CD4-positive, alpha-beta T cell (primary cell): ENCODE measurements at regions of chr4 and their contacts with region 1.

Region 1: GRCh38 chr4:75724066-75724866 is at the start of gene USO1:
- DNase-seq: peak; percentile 99 to 100 (median 99)
- ATAC-seq: peak; percentile 91
- H3K4me3 ChIP-seq: peak within 1 kb of the TSS; percentile 93
- H3K4me3 Mint-ChIP-seq: peak within 1 kb of the TSS; percentile 99
- H3K27ac ChIP-seq: peak within 1 kb of the TSS; percentile 65 to 83
- H3K27ac Mint-ChIP-seq: peak within 1 kb of the TSS; percentile 95
- H3K4me1 ChIP-seq: peaks cover 27% of the 10 kb centered on the region
- H3K4me1 Mint-ChIP-seq: peaks cover 64% of the 10 kb centered on the region
- H3K27me3 ChIP-seq: no peaks in the 10 kb centered on the region
- H3K27me3 Mint-ChIP-seq: no peaks in the 10 kb centered on the region
- CTCF ChIP-seq: peak; percentile 78
- total RNA-seq, gene USO1: 10.5 to 10.9 TPM

Region 2: DNA sequence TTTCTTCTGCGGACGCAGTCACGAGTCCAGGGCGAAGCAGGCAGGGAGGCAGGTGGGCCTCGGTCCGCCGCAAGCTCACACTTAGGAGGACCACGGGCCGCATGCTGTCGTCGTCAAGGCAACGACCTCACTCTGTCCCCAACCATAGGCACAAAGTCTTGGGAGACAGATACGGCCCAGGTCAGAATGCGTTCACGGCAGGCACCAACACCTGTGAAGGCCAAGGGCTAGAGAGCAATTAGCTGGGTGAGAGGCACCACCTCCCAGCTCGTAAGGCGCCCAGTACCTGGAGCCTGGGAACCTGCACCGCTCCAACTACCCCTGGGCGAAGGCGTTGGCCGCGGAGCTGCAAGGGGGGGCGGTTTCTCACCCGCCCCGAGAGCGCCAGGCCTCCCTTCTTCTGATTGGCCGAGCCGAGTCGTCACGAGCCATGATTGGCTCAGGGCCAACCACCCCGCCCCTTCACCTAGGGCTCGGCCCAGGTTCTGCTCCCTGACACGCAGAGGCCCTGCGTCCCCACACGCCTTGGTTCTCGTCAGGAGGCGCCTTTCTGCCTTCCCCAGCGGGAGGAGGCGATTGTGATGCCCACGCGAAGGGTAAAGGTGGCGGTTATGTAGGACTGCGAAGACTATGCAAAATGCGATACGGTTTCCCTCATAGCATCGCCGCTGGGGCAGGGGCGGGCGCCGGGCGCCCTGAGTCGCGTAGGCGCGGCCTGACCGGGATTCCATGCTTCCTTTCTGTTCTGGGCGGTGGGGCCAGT is 93.9 kb before region 1 on chr4 and contains the start of gene CDKL2:
- CTCF ChIA-PET with region 1: interaction called, 3 read pairs
- POLR2A ChIA-PET with region 1: interaction called, 20 read pairs
- intact Hi-C with region 1: loop called (anchors 1 to 2 kb)
- DNase-seq: peak; percentile 88 to 96 (median 92)
- ATAC-seq: peak; percentile 99
- H3K4me3 ChIP-seq: peak within 1 kb of the TSS; percentile 85
- H3K4me3 Mint-ChIP-seq: peak within 1 kb of the TSS; percentile 90
- H3K27ac ChIP-seq: peak within 1 kb of the TSS in 1 of 2 donors; percentile 48
- H3K27ac Mint-ChIP-seq: peak within 1 kb of the TSS; percentile 75
- H3K4me1 ChIP-seq: peaks cover 16% of the 10 kb centered on the region
- H3K4me1 Mint-ChIP-seq: peaks cover 12% of the 10 kb centered on the region
- H3K27me3 ChIP-seq: no peaks in the 10 kb centered on the region
- H3K27me3 Mint-ChIP-seq: no peaks in the 10 kb centered on the region
- CTCF ChIP-seq: no peak
- total RNA-seq, gene CDKL2: 0.38 to 0.92 TPM

Region 3: GRCh38 chr4:75653845-75654503 is 70.3 kb before region 1 on chr4:
- CTCF ChIA-PET with region 1: interaction called, 16 read pairs
- POLR2A ChIA-PET with region 1: interaction called, 15 read pairs
- intact Hi-C with region 1: loop called in 1 of 2 experiments (anchors 1 kb)
- DNase-seq: peak in 3 of 14 experiments; percentile 27 to 34 (median 29)
- ATAC-seq: no peak
- H3K4me3 ChIP-seq: no peak overlapping the region
- H3K4me3 Mint-ChIP-seq: no peak overlapping the region
- H3K27ac ChIP-seq: peak overlapping the region in 1 of 2 donors; percentile 9
- H3K27ac Mint-ChIP-seq: peak overlapping the region; percentile 78
- H3K4me1 ChIP-seq: peaks cover 5% of the 10 kb centered on the region
- H3K4me1 Mint-ChIP-seq: peaks cover 53% of the 10 kb centered on the region
- H3K27me3 ChIP-seq: no peaks in the 10 kb centered on the region
- H3K27me3 Mint-ChIP-seq: no peaks in the 10 kb centered on the region
- CTCF ChIP-seq: peak; percentile 29

Region 4: GRCh38 chr4:75673027-75673958 is 51.0 kb before region 1 on chr4 and contains the start of gene G3BP2:
- CTCF ChIA-PET with region 1: interaction called, 17 read pairs
- POLR2A ChIA-PET with region 1: interaction called, 175 read pairs
- intact Hi-C with region 1: loop called (anchors 1 kb)
- DNase-seq: peak; percentile 95 to 100 (median 97)
- ATAC-seq: peak; percentile 91
- H3K4me3 ChIP-seq: peak within 1 kb of the TSS; percentile 83
- H3K4me3 Mint-ChIP-seq: peak within 1 kb of the TSS; percentile 97
- H3K27ac ChIP-seq: peak within 1 kb of the TSS; percentile 97 to 98
- H3K27ac Mint-ChIP-seq: peak within 1 kb of the TSS; percentile 99
- H3K4me1 ChIP-seq: peaks cover 26% of the 10 kb centered on the region
- H3K4me1 Mint-ChIP-seq: peaks cover 57% of the 10 kb centered on the region
- H3K27me3 ChIP-seq: no peaks in the 10 kb centered on the region
- H3K27me3 Mint-ChIP-seq: no peaks in the 10 kb centered on the region
- CTCF ChIP-seq: no peak
- total RNA-seq, gene G3BP2: 319 to 322 TPM

Region 5: GRCh38 chr4:75708218-75708691 is 16.0 kb before region 1 on chr4:
- CTCF ChIA-PET with region 1: interaction called, 14 read pairs
- POLR2A ChIA-PET with region 1: interaction called, 15 read pairs
- intact Hi-C with region 1: no loop called
- DNase-seq: peak in 12 of 14 experiments; percentile 12 to 74 (median 34)
- ATAC-seq: peak; percentile 94
- H3K4me3 ChIP-seq: no peak overlapping the region
- H3K4me3 Mint-ChIP-seq: no peak overlapping the region
- H3K27ac ChIP-seq: no peak overlapping the region
- H3K27ac Mint-ChIP-seq: peak overlapping the region; percentile 77
- H3K4me1 ChIP-seq: peaks cover 3% of the 10 kb centered on the region
- H3K4me1 Mint-ChIP-seq: peaks cover 8% of the 10 kb centered on the region
- H3K27me3 ChIP-seq: no peaks in the 10 kb centered on the region
- H3K27me3 Mint-ChIP-seq: no peaks in the 10 kb centered on the region
- CTCF ChIP-seq: peak; percentile 66

Region 6: GRCh38 chr4:75844151-75844662 is 119.9 kb after region 1 on chr4:
- CTCF ChIA-PET with region 1: no interaction called
- POLR2A ChIA-PET with region 1: no interaction called
- intact Hi-C with region 1: no loop called
- DNase-seq: no peak
- ATAC-seq: no peak
- H3K4me3 ChIP-seq: no peak overlapping the region
- H3K4me3 Mint-ChIP-seq: no peak overlapping the region
- H3K27ac ChIP-seq: no peak overlapping the region
- H3K27ac Mint-ChIP-seq: no peak overlapping the region
- H3K4me1 ChIP-seq: peaks cover 4% of the 10 kb centered on the region
- H3K4me1 Mint-ChIP-seq: no peaks in the 10 kb centered on the region
- H3K27me3 ChIP-seq: no peaks in the 10 kb centered on the region
- H3K27me3 Mint-ChIP-seq: no peaks in the 10 kb centered on the region
- CTCF ChIP-seq: no peak

Region 7: GRCh38 chr4:75869100-75869499 is 144.8 kb after region 1 on chr4:
- CTCF ChIA-PET with region 1: no interaction called
- POLR2A ChIA-PET with region 1: no interaction called
- intact Hi-C with region 1: no loop called
- DNase-seq: no peak
- ATAC-seq: no peak
- H3K4me3 ChIP-seq: no peak overlapping the region
- H3K4me3 Mint-ChIP-seq: no peak overlapping the region
- H3K27ac ChIP-seq: no peak overlapping the region
- H3K27ac Mint-ChIP-seq: no peak overlapping the region
- H3K4me1 ChIP-seq: no peaks in the 10 kb centered on the region
- H3K4me1 Mint-ChIP-seq: no peaks in the 10 kb centered on the region
- H3K27me3 ChIP-seq: no peaks in the 10 kb centered on the region
- H3K27me3 Mint-ChIP-seq: peaks cover 4% of the 10 kb centered on the region
- CTCF ChIP-seq: no peak

Region 8: DNA sequence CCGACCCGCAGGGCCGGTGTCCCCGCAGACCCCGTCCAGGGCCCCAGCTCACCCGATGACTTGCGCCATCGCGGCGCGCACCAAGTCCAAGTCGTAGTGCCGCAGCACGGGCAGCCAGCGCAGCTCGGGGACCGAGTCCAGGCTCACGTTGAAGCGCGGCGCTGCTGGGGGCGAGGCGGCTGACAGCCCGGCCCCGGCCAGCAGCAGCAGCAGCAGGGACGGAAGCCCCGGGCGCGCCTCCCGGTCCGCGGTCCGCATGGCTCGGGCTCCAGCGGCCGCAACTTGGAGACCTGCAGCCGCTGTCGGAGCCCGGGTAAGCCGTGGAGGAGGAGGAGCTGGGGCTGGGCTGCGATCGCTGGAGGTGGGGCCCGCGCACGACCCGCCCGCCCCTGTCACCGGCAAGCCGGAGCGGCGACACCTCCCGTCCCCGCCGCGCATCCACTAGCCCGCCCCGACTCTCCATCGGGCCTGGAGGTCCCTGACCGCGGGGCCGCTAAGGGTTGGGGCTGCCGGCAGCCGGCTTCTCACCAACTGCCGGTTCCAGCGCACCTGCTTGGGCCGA is 216.5 kb after region 1 on chr4 and contains the start of gene NAAA:
- CTCF ChIA-PET with region 1: no interaction called
- POLR2A ChIA-PET with region 1: interaction called, 17 read pairs
- intact Hi-C with region 1: loop called in 1 of 2 experiments (anchors 2 kb)
- DNase-seq: peak; percentile 51 to 93 (median 72)
- ATAC-seq: peak; percentile 83
- H3K4me3 ChIP-seq: peak within 1 kb of the TSS; percentile 86
- H3K4me3 Mint-ChIP-seq: peak within 1 kb of the TSS; percentile 100
- H3K27ac ChIP-seq: peak within 1 kb of the TSS; percentile 79 to 86
- H3K27ac Mint-ChIP-seq: peak within 1 kb of the TSS; percentile 95
- H3K4me1 ChIP-seq: peaks cover 20% of the 10 kb centered on the region
- H3K4me1 Mint-ChIP-seq: peaks cover 27% of the 10 kb centered on the region
- H3K27me3 ChIP-seq: no peaks in the 10 kb centered on the region
- H3K27me3 Mint-ChIP-seq: no peaks in the 10 kb centered on the region
- CTCF ChIP-seq: no peak
- total RNA-seq, gene NAAA: 32.6 to 33.3 TPM

Region 9: DNA sequence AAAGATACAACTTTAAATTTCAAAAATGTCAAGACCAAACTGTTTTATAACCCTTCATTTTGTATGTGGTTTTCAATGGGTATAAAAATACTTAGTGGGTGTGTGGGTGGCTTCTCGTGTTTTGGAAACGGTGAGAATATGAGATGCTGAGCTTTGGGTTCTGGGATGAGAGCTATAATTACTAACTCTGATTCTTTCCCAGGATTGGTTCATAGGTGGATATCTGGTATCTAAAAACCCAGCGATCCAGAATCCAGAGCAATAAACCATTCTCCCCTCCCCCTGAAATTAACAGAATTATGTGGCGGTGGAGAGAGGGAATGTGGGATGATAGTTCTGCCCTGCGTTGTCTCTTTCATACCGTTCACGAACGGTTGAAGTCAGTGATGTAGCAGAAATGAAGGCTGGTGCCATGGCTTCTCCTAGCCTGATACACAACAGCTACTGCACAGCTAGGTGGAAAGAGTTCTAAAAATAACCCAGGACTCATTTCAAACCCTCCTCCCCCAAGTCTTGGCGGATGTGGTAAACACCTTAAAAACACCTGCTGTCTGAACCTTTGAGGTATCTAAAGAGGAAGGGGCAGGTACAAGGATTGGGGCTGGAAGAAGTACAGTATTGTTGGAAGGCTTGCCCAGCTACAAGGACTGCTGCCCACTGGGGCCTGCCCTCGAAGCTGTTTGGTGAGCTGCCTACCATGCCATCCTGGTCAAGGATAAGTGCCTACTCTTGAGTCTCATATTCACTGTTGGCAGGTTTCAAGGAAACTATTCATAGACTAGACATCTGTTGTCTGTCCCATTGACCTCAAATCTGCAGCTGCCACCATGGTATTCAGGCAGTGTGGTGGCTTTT is 1269.7 kb after region 1 on chr4:
- CTCF ChIA-PET with region 1: no interaction called
- POLR2A ChIA-PET with region 1: no interaction called
- intact Hi-C with region 1: loop called in 1 of 2 experiments (anchors 5 kb)
- DNase-seq: peak in 13 of 14 experiments; percentile 18 to 91 (median 37)
- ATAC-seq: peak; percentile 81
- H3K4me3 ChIP-seq: peak overlapping the region; percentile 16
- H3K4me3 Mint-ChIP-seq: peak overlapping the region; percentile 80
- H3K27ac ChIP-seq: peak overlapping the region in 1 of 2 donors; percentile 64
- H3K27ac Mint-ChIP-seq: peak overlapping the region; percentile 92
- H3K4me1 ChIP-seq: peaks cover 46% of the 10 kb centered on the region
- H3K4me1 Mint-ChIP-seq: peaks cover 81% of the 10 kb centered on the region
- H3K27me3 ChIP-seq: no peaks in the 10 kb centered on the region
- H3K27me3 Mint-ChIP-seq: no peaks in the 10 kb centered on the region
- CTCF ChIP-seq: no peak

Region 10: GRCh38 chr4:77269161-77269904 is 1545.1 kb after region 1 on chr4:
- CTCF ChIA-PET with region 1: no interaction called
- POLR2A ChIA-PET with region 1: no interaction called
- intact Hi-C with region 1: no loop called
- DNase-seq: no peak
- ATAC-seq: no peak
- H3K4me3 ChIP-seq: no peak overlapping the region
- H3K4me3 Mint-ChIP-seq: no peak overlapping the region
- H3K27ac ChIP-seq: no peak overlapping the region
- H3K27ac Mint-ChIP-seq: no peak overlapping the region
- H3K4me1 ChIP-seq: no peaks in the 10 kb centered on the region
- H3K4me1 Mint-ChIP-seq: no peaks in the 10 kb centered on the region
- H3K27me3 ChIP-seq: no peaks in the 10 kb centered on the region
- H3K27me3 Mint-ChIP-seq: peaks cover 9% of the 10 kb centered on the region
- CTCF ChIP-seq: no peak